ENCODE measurements at regions of chr20 and their contacts with region 1.

Region 1: DNA sequence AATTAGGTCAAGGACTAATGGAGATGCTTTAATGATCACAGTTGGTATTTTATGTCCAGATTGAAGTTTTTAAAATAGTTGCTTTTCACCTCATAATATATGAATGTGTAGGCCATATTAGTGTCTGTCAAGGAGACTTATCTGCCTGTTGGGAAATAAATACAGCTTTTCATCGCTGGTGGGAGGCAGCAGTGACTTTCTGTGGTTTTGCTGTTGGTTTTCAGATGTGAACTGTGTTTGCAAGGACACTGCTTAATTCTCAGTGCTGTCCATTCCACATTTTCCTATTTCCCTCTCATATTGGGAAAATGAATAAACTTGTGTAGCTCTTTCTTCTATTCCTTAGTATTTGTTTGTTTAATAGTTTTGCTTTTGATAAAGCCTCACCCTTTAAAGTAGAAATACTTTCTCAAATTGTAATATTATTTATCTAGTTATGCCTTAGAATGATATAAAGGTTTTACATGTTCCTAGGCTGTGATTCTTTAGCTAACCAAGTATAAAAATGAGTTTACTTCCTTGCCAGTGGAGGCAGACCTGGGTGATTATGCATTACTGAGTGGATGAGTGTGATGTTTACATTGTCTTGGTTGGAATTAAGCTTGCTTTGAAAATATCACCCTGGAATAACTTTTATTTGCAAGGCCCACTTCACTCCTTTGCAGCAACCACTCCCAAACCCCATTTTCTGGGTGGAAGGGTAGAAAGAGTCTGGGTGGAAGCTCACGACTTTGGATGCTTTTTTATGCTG is 3.3 kb downstream of the PLCB4 start:
- DNase-seq: no peak
- H3K4me3 ChIP-seq: no peak overlapping the region
- H3K27ac ChIP-seq: no peak overlapping the region
- H3K4me1 ChIP-seq: no peaks in the 10 kb centered on the region
- H3K27me3 ChIP-seq: no peaks in the 10 kb centered on the region
- CTCF ChIP-seq: no peak
- POLR2A ChIP-seq: no peak

Region 2: DNA sequence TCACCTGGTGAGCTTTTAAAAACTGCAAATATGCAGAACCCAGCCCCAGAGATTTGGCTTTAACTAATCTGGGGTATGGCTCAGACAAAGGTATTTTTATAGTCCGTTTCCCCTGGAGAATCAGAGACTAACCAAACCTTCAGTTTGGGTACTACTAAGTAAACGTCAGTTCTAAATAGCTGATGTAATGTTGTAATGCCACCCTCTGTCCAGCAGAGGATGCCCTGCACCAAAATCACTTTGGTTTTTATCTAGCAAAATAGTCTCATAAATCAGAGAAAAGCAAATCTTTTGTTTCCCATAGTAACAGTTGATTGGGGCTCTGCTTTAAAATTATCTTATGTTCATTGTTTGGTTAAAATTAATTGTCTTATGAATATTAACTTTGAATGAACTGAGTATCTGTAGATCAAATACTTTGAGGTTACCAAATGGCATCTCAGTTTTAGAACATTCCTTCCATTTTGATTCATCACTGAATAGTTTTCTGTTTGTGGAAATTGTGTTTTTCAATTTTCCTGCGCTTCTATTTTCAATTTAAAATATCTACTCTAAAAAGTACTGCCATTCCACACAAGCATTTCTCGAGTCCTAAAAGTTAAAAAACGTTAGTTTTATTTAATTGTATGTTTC is 281.6 kb before region 1 on chr20:
- intact Hi-C with region 1: loop called (anchors 10 kb)
- DNase-seq: no peak
- H3K4me3 ChIP-seq: no peak overlapping the region
- H3K27ac ChIP-seq: no peak overlapping the region
- H3K4me1 ChIP-seq: no peaks in the 10 kb centered on the region
- H3K27me3 ChIP-seq: no peaks in the 10 kb centered on the region
- CTCF ChIP-seq: peak; percentile 89 to 98 (median 95)
- POLR2A ChIP-seq: no peak

Region 3: DNA sequence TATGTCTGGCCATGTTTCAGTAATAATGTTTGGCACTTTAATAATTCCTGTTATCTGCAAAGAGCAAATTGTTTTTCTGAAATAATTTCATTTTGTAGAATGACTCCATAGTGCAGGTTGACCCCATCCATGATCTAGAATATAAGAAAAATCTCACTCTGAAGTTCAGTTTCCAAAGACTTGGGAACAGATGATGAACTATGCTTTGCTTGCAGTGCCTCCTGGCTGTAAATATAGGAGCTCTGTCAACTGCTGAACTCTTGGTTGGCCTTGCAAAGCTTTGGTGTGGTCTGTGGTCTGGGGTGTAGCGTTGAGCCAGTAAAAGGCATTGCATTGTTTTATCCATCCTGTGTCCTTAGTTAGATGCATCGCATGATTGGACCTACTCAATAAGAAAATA is 100.7 kb after region 1 on chr20:
- intact Hi-C with region 1: no loop called
- DNase-seq: no peak
- H3K4me3 ChIP-seq: no peak overlapping the region
- H3K27ac ChIP-seq: no peak overlapping the region
- H3K4me1 ChIP-seq: no peaks in the 10 kb centered on the region
- H3K27me3 ChIP-seq: no peaks in the 10 kb centered on the region
- CTCF ChIP-seq: no peak
- POLR2A ChIP-seq: no peak

Region 4: GRCh38 chr20:9440892-9441291 is 368.7 kb after region 1 on chr20:
- intact Hi-C with region 1: no loop called
- DNase-seq: no peak
- H3K4me3 ChIP-seq: no peak overlapping the region
- H3K27ac ChIP-seq: no peak overlapping the region
- H3K4me1 ChIP-seq: no peaks in the 10 kb centered on the region
- H3K27me3 ChIP-seq: no peaks in the 10 kb centered on the region
- CTCF ChIP-seq: no peak
- POLR2A ChIP-seq: no peak

Measured in breast epithelium (tissue), 4 donors.